Activated CD4-positive, alpha-beta T cell treated with anti-CD3 and anti-CD28 coated beads, Interleukin-2, amount 10 ng/mL, durations not matched to agents 24 days and 14 days (primary cell): ENCODE measurements at regions of chrX and their contacts with region 1.

Region 1: DNA sequence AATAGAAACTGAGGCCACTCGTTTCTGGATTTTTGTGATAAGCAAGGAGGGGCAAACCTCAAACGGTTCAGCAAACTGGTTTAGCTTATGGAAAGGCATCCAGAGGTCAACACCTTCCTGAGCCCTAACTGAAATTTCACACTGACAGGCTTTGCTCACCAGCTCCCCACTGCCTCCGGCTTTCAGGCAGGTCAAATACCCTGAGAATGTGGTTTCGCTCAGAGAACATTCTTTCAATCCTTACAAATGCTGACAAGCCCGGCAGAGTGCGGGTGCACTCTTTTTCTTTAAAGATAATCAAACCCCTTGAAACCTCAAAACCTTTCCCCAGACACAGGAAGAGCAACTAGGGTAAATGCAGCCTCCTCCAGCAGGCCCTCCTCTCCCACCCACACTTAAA is 41.5 kb downstream of the CD40LG start:
- DNase-seq: peak; percentile 74
- H3K4me3 Mint-ChIP-seq: peak overlapping the region; percentile 36
- H3K27ac Mint-ChIP-seq: peak overlapping the region; percentile 84
- H3K4me1 Mint-ChIP-seq: peaks cover 50% of the 10 kb centered on the region
- H3K27me3 Mint-ChIP-seq: no peaks in the 10 kb centered on the region

Region 2: GRCh38 chrX:136652822-136653723 is 36.4 kb before region 1 on chrX:
- intact Hi-C with region 1: loop called (anchors 1 kb)
- DNase-seq: peak; percentile 80
- H3K4me3 Mint-ChIP-seq: peak overlapping the region; percentile 98
- H3K27ac Mint-ChIP-seq: peak overlapping the region; percentile 98
- H3K4me1 Mint-ChIP-seq: peaks cover 45% of the 10 kb centered on the region
- H3K27me3 Mint-ChIP-seq: no peaks in the 10 kb centered on the region

Region 3: DNA sequence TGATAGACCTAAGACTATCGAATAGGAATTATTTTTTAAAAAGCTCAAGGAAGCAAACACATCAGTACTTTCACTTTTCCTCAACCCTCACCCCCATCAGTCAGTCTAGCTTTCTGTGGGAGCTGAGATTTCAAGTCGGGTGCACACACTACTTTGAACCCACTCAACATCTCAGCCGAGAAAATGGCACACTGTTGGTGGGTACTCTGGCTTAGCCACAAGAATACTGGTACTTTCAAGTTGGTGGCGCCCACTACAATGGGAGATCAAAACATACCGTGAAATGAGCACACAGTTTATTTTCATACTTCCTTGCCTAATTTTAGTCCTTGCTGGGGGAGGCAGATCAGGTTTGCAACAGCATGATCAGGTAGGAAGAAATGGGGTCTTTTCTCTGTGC is 31.3 kb before region 1 on chrX:
- intact Hi-C with region 1: loop called (anchors 1 kb)
- DNase-seq: peak; percentile 75
- H3K4me3 Mint-ChIP-seq: peak overlapping the region; percentile 98
- H3K27ac Mint-ChIP-seq: peak overlapping the region; percentile 98
- H3K4me1 Mint-ChIP-seq: peaks cover 70% of the 10 kb centered on the region
- H3K27me3 Mint-ChIP-seq: no peaks in the 10 kb centered on the region

Region 4: DNA sequence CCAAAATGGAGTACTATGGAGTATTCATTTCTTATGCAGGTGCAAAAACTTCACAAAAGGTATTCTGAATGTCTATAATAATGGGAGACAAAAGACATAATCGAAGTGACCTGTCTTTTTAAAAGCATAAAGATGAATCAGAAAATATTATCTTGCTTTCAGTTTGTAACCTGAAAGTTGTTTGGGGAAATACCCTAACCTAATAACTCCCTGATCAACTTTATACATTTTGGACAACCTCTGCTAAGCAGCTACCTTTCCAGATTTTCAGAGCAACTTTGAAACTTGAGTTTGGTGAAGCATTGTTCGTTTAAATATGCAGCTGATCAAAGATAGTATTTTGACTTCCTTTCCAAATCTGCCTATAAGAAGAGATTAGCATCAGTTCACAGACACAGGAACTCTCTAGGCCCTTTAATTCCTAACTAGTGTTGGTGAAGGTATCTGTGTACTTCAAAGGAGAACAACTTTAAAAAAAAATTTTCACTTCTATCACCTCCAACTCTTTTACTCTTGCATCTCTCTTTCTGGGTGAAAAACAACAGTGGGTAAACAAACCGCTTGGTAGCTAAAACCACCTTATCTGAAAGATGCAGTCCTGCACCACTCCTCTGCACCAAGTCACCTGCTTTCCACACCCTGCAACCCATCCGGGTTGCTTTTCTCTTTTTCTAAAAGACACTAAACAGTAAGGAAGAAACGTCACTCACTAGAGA is 15.0 kb before region 1 on chrX:
- intact Hi-C with region 1: loop called (anchors 1 kb)
- DNase-seq: peak; percentile 79
- H3K4me3 Mint-ChIP-seq: peak overlapping the region; percentile 73
- H3K27ac Mint-ChIP-seq: peak overlapping the region; percentile 90
- H3K4me1 Mint-ChIP-seq: peaks cover 68% of the 10 kb centered on the region
- H3K27me3 Mint-ChIP-seq: no peaks in the 10 kb centered on the region